ENCODE measurements at regions of chr15 and their contacts with region 1.

Region 1: GRCh38 chr15:47987908-47988532 is 132.8 kb upstream of the SLC24A5 start:
- DNase-seq: peak in 2 of 5 donors; percentile 31 to 34
- ATAC-seq: peak; percentile 75 to 94 (median 88)
- H3K4me3 ChIP-seq: no peak overlapping the region
- H3K27ac ChIP-seq: no peak overlapping the region
- H3K4me1 ChIP-seq: no peaks in the 10 kb centered on the region
- H3K27me3 ChIP-seq: no peaks in the 10 kb centered on the region
- CTCF ChIP-seq: peak; percentile 60 to 84 (median 74)
- POLR2A ChIP-seq: no peak

Region 2: DNA sequence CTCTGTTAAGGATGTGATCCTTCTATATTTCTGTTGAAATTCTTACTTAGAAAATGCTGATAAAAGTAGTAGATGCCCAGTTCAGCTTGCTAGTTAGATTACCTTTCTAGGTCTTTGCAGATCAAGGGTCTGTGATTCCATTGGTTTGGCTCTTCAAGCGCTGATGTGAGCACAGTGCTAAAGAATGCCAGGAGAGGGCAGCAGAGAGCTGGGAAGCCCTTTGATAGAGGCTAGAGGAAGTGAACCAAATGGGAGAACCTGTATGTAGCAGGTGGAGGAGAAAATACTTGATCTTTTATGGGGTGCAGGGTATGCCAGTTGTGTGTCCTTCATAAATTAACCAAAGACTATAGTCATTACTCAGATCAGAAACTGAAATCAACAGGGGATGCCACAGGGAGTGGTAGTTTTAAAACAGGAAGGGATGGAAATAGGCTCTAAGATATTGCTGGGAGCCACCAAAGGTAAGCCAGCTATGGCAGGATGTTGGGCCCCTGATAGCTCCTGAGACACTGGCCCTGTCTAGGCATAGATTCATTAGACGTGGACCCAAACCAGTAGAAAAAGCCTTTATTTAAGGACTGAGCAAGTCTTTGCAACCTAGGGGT is 1675.8 kb before region 1 on chr15:
- intact Hi-C with region 1: loop called in 2 of 10 experiments (anchors 10 kb)
- DNase-seq: peak in 4 of 5 donors; percentile 52 to 67 (median 59)
- ATAC-seq: peak; percentile 47 to 94 (median 85)
- H3K4me3 ChIP-seq: no peak overlapping the region
- H3K27ac ChIP-seq: no peak overlapping the region
- H3K4me1 ChIP-seq: peaks cover 0 to 21% (median 0%) of the 10 kb centered on the region in 12 donors
- H3K27me3 ChIP-seq: no peaks in the 10 kb centered on the region
- CTCF ChIP-seq: peak; percentile 81 to 96 (median 87)
- POLR2A ChIP-seq: no peak

Region 3: GRCh38 chr15:47473832-47474231 is 514.2 kb before region 1 on chr15:
- intact Hi-C with region 1: loop called in 6 of 10 experiments (anchors 2 to 10 kb)
- DNase-seq: peak; percentile 63 to 76 (median 74)
- ATAC-seq: peak; percentile 93 to 97 (median 94)
- H3K4me3 ChIP-seq: no peak overlapping the region
- H3K27ac ChIP-seq: peak overlapping the region in 8 of 12 donors; percentile 7 to 57 (median 34)
- H3K4me1 ChIP-seq: peaks cover 0 to 28% (median 14%) of the 10 kb centered on the region in 12 donors
- H3K27me3 ChIP-seq: no peaks in the 10 kb centered on the region
- CTCF ChIP-seq: no peak
- POLR2A ChIP-seq: no peak

Region 4: GRCh38 chr15:47496343-47497171 is 491.5 kb before region 1 on chr15:
- intact Hi-C with region 1: loop called in 7 of 10 experiments (anchors 1 to 10 kb)
- DNase-seq: no peak
- ATAC-seq: no peak
- H3K4me3 ChIP-seq: no peak overlapping the region
- H3K27ac ChIP-seq: no peak overlapping the region
- H3K4me1 ChIP-seq: no peaks in the 10 kb centered on the region
- H3K27me3 ChIP-seq: peaks cover 0 to 2% (median 0%) of the 10 kb centered on the region in 9 donors
- CTCF ChIP-seq: no peak
- POLR2A ChIP-seq: no peak

Region 5: DNA sequence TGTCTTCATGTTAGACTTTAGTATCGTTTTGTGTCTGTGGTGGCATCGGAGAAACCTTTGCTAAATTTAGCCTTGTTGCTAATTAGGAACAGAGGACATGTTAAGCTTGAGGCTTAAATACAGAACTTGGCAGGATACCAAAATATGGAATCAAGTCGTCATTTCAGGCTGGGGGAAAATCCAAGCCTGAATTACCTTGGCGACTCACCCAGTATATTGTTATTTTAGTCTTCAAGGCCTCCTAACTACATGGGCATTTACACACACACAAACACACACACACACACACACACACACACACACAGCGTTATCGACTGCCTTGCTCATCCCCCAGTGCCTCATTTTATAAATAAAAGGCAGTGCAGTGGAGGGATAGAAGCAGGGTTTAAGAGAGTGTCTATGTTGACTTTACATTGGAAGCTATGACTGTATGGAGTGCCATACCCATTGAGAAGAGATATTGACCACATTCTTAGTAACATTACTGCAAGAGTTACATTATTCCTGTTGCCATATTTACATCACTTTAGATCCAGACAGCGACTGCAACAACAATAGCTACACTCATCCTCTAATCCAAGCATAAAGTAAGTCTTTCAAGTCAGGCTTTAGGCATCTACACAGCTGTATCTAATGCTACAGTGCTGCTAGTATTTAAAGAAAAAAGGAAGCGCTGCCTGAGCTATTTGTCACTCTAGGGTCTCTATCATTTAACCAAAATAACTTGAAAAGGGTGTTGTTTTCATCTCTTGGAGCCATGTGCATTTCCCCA is 481.5 kb before region 1 on chr15:
- intact Hi-C with region 1: loop called in 6 of 10 experiments (anchors 1 to 10 kb)
- DNase-seq: peak in 3 of 5 donors; percentile 18 to 29 (median 22)
- ATAC-seq: peak; percentile 74 to 91 (median 87)
- H3K4me3 ChIP-seq: no peak overlapping the region
- H3K27ac ChIP-seq: peak overlapping the region in 8 of 12 donors; percentile 11 to 70 (median 43)
- H3K4me1 ChIP-seq: peaks cover 0 to 42% (median 13%) of the 10 kb centered on the region in 12 donors
- H3K27me3 ChIP-seq: peaks cover 0 to 5% (median 0%) of the 10 kb centered on the region in 9 donors
- CTCF ChIP-seq: no peak
- POLR2A ChIP-seq: no peak

Region 6: DNA sequence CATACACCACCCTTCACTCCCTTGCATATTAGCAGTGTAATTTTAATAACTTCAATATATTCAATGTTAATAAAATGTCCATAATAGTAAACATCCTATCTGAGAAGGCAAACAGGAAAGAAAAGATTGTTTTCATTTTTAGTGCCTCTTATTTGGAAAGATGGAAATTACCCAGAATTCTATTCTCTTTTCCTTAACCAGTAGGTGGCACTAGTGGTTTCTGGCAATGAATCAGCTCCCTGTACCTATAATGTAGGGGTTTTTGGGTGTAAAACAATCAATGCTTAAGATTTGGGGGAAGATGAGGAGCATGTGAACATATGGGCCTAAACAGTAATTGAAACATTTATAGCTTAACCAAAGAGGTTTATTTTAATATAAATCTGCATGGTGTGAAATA is 276.4 kb before region 1 on chr15:
- intact Hi-C with region 1: loop called in 9 of 10 experiments (anchors 2 to 10 kb)
- DNase-seq: no peak
- ATAC-seq: no peak
- H3K4me3 ChIP-seq: no peak overlapping the region
- H3K27ac ChIP-seq: no peak overlapping the region
- H3K4me1 ChIP-seq: peaks cover 0 to 12% (median 7%) of the 10 kb centered on the region in 12 donors
- H3K27me3 ChIP-seq: peaks cover 0 to 4% (median 0%) of the 10 kb centered on the region in 9 donors
- CTCF ChIP-seq: peak; percentile 28 to 68 (median 54)
- POLR2A ChIP-seq: no peak

Region 7: DNA sequence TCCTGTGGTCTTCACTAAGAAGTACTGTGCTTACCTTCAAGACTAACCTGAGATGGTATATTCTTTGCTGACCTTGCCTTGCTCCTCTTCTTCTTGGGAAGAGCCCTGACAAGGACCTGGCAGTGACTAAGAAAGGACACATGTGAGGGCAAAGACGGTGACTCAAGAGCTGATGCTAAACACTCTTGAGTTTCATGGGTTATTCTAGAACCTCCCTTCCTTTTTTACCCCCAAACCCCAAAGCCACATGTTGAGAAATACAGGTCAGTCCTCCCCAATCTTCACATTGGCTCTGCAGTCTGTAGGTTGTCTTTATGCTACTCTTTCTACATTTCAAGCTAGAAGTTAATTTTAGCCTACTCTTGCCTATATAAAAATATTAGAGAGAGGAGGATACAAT is 70.1 kb before region 1 on chr15:
- intact Hi-C with region 1: no loop called
- DNase-seq: no peak
- ATAC-seq: no peak
- H3K4me3 ChIP-seq: no peak overlapping the region
- H3K27ac ChIP-seq: no peak overlapping the region
- H3K4me1 ChIP-seq: no peaks in the 10 kb centered on the region
- H3K27me3 ChIP-seq: no peaks in the 10 kb centered on the region
- CTCF ChIP-seq: no peak
- POLR2A ChIP-seq: no peak

Measured in heart left ventricle (tissue), 16 donors.